Colonic mucosa (tissue), 4 donors: ENCODE measurements at regions of chr1 and their contacts with region 1.

Region 1: GRCh38 chr1:14778898-14779865 is 180.7 kb downstream of the KAZN start:
- DNase-seq: peak; percentile 48
- H3K4me3 ChIP-seq: no peak overlapping the region
- H3K27ac ChIP-seq: no peak overlapping the region
- H3K4me1 ChIP-seq: no peaks in the 10 kb centered on the region
- H3K27me3 ChIP-seq: no peaks in the 10 kb centered on the region
- CTCF ChIP-seq: peak; percentile 64

Region 2: GRCh38 chr1:14894811-14895560 is 115.8 kb after region 1 on chr1:
- intact Hi-C with region 1: no loop called
- DNase-seq: peak; percentile 33
- H3K4me3 ChIP-seq: no peak overlapping the region
- H3K27ac ChIP-seq: no peak overlapping the region
- H3K4me1 ChIP-seq: no peaks in the 10 kb centered on the region
- H3K27me3 ChIP-seq: no peaks in the 10 kb centered on the region
- CTCF ChIP-seq: no peak

Region 3: DNA sequence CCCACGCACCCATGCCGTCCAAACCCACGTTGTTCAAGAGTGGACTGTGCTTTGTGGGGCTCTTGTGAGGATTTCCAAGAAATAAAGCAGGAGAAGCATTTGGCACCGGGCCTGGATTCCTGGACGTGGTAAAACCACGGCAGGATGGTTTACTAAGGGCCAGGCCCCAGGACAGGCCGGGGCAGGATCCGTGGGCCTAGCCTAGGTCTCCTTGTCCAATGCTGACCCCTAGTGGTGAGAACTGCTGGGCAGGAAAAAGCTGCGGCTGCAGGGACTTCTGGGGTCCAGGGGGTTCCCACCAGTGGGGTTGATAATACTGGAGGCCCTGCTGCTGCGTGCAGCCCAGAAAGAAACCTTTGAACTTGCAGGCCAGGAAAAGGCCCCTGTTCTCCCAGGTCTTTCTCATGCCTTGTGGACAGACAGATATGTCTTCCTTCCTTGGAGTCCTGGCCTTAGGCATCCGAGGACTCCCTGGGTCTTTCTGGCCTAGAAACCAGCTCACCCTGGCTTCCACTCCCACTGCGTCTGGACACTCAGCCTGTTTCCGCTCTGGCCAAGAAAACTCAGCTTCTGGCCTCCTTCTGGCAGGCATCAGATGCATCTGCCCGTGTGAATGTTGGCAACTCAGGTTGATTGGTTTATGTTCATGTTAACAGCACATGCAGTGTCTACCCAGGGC is 267.4 kb after region 1 on chr1:
- intact Hi-C with region 1: loop called (anchors 5 kb)
- DNase-seq: peak; percentile 70
- H3K4me3 ChIP-seq: no peak overlapping the region
- H3K27ac ChIP-seq: no peak overlapping the region
- H3K4me1 ChIP-seq: no peaks in the 10 kb centered on the region
- H3K27me3 ChIP-seq: no peaks in the 10 kb centered on the region
- CTCF ChIP-seq: peak; percentile 97